AG04450 (cell line): ENCODE measurements at regions of chr6 and their contacts with region 1.

Region 1: DNA sequence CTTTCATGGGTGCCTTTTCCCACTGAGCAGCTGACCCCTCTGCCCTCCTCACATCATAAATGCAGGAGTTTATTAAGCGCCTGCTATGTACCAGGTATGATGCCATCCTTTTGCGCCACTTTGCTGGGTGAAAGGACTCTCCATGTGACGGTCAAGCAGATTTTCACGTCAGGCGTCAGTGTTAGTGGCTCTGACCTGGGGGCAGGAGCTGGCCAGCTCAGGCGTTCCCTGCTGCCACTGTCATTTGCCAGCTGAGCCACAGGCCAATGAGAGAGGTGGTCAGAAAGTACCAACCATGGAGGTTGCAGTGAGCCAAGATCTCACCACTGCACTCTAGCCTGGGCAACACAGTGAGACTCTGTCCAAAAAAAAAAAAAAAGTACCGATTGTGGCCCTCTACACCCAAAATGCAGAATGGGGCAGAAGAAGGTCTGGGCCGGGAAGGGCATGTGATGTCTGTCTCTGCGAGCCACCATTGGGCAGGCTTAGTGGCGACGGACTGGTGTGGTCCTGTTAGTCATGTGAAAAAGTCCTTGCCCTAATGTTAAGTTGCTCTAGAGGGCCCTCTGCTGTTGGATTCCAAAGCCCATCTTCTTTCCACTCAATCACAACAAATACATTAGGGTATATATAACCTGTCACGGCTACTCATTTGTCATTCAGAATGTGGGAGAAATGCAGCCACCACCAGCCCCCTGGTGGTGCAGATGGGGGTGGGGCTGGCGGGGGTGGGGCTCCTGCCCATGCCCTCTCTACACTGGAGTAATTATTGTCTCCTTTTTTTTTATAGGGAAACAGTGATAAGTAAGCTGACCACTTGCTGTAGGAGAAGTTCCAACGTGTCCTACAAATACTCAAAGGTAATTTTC is 18.4 kb upstream of the SLC22A1 start:
- DNase-seq: no peak
- H3K4me3 ChIP-seq: no peak overlapping the region
- H3K27ac ChIP-seq: no peak overlapping the region
- H3K27me3 ChIP-seq: no peaks in the 10 kb centered on the region
- CTCF ChIP-seq: peak; percentile 39

Region 2: DNA sequence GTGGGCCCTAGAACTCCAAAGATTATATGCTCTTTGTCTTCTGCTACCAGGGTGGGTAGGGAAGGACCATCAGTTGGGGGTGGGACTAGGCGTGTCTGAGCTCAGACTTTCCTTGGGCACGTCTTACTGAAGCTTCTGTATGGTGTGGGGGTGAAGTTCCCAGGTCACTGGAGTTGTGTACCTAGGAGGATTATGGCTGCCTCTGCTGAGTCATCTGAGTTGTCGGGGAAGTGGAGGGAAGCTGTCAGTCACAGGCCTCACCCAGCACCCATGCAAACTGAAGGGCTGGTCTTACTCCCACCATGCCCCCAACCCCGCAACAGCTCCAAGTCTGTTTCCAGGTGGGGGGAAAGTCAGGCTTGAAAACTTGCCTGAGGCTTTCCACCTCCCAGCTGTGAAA is 470.8 kb after region 1 on chr6:
- CTCF ChIA-PET with region 1: interaction called, 11 read pairs
- POLR2A ChIA-PET with region 1: no interaction called
- DNase-seq: no peak
- H3K4me3 ChIP-seq: no peak overlapping the region
- H3K27ac ChIP-seq: no peak overlapping the region
- H3K27me3 ChIP-seq: no peaks in the 10 kb centered on the region
- CTCF ChIP-seq: no peak